ENCODE measurements at regions of chr19 and their contacts with region 1.

Region 1: DNA sequence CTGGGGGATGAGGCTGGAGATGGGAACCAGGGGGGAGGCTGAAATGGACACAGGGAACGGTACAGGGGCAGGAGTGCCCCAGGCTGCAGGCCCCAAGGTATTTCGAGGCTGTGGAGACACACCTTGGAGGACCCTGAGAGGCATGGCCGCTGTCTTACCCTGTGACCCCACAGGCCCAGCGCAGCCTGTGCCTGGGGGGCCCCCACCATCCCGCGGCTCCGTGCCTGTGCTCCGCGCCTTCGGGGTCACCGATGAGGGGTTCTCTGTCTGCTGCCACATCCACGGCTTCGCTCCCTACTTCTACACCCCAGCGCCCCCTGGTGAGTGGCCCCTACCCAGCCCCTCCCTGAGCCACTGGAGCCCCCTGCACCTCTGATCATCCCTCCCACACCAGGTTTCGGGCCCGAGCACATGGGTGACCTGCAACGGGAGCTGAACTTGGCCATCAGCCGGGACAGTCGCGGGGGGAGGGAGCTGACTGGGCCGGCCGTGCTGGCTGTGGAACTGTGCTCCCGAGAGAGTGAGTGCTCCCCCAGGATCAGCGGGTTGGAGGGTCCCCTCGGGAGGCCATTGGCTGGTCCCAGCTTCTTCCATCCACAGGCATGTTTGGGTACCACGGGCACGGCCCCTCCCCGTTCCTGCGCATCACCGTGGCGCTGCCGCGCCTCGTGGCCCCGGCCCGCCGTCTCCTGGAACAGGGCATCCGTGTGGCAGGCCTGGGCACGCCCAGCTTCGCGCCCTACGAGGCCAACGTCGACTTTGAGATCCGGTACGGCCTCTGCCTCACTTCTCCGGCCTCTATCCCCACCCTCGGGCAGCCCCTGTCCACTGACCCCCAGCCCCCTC is 16.9 kb upstream of the SPIB start:
- DNase-seq: no peak
- H3K4me3 ChIP-seq: no peak overlapping the region
- H3K27ac ChIP-seq: no peak overlapping the region
- H3K4me1 ChIP-seq: no peaks in the 10 kb centered on the region
- H3K27me3 ChIP-seq: no peaks in the 10 kb centered on the region
- CTCF ChIP-seq: no peak
- POLR2A ChIP-seq: no peak

Region 2: GRCh38 chr19:50414864-50415660 is 13.2 kb after region 1 on chr19:
- CTCF ChIA-PET with region 1: interaction called, 5 read pairs
- POLR2A ChIA-PET with region 1: interaction called, 15 read pairs
- dilution Hi-C with region 1: no loop called
- intact Hi-C with region 1: no loop called
- DNase-seq: peak; percentile 60
- H3K4me3 ChIP-seq: no peak overlapping the region
- H3K27ac ChIP-seq: no peak overlapping the region
- H3K4me1 ChIP-seq: no peaks in the 10 kb centered on the region
- H3K27me3 ChIP-seq: peaks cover 15 to 18% of the 10 kb centered on the region in 2 experiments
- CTCF ChIP-seq: peak; percentile 87 to 98
- POLR2A ChIP-seq: no peak